ENCODE measurements at regions of chr13 and their contacts with region 1.

Region 1: DNA sequence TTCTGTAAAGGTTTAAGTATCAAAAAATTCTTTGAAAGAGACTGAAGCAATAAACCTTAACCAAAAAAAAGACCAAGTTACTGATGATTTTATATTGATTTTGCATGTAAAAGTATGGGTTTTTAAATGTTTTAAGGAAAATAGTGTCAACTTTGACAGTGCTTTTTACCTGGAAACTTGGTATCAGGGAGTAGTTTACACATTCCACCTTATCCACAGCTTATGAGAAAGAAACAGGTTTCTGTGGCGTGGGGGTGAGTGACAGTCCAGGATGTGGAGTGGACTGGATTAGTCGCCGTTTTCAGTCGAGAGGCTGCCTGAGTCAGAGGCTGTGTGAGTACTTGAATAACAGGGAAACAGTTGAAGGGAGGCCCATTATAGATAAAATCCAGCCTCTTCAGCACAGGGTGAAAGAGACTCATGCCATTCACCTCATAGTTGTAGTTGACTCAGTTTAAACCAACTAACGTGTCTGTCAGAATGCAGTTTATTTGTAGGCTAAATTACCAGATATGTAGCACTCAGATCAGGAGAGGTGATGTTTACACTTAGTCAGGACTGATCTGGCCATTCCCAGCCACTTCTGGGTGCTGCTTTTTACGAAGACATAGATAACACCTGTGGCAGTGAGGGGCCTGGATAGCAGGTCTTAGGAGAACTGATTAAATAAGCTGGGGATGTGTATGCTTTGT is 595 bp upstream of the GPR183 start:
- DNase-seq: peak; percentile 78
- H3K4me3 Mint-ChIP-seq: peak overlapping the region; percentile 79
- H3K27ac Mint-ChIP-seq: peak overlapping the region; percentile 83
- H3K4me1 Mint-ChIP-seq: peaks cover 82% of the 10 kb centered on the region
- H3K27me3 Mint-ChIP-seq: no peaks in the 10 kb centered on the region

Region 2: GRCh38 chr13:99288089-99288488 is 19.7 kb before region 1 on chr13:
- CTCF ChIA-PET with region 1: interaction called, 7 read pairs
- POLR2A ChIA-PET with region 1: interaction called, 393 read pairs
- DNase-seq: peak; percentile 60
- H3K4me3 Mint-ChIP-seq: no peak overlapping the region
- H3K27ac Mint-ChIP-seq: peak overlapping the region; percentile 84
- H3K4me1 Mint-ChIP-seq: peaks cover 73% of the 10 kb centered on the region
- H3K27me3 Mint-ChIP-seq: no peaks in the 10 kb centered on the region

Region 3: DNA sequence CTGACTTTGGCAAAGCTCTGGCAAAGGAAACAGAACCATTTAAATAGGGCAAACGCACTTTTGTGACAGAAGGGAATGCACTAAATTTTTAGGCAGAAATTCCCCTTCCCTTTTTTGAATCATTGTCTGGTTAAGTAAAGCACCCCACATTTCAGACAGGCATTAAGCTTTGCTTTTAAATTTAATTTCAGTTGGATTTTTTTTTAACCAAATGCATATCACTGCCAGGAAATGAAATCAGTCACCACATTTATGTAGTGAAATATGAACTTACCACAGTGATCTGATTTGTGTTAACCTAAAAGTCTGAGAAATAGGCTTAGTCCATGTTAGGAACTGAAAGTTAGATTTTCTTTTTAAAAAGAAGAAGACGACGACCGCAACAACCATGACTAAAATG is 11.4 kb before region 1 on chr13:
- CTCF ChIA-PET with region 1: interaction called, 16 read pairs
- POLR2A ChIA-PET with region 1: interaction called, 139 read pairs
- DNase-seq: no peak
- H3K4me3 Mint-ChIP-seq: peak overlapping the region; percentile 71
- H3K27ac Mint-ChIP-seq: peak overlapping the region; percentile 94
- H3K4me1 Mint-ChIP-seq: peaks cover 78% of the 10 kb centered on the region
- H3K27me3 Mint-ChIP-seq: no peaks in the 10 kb centered on the region

Region 4: DNA sequence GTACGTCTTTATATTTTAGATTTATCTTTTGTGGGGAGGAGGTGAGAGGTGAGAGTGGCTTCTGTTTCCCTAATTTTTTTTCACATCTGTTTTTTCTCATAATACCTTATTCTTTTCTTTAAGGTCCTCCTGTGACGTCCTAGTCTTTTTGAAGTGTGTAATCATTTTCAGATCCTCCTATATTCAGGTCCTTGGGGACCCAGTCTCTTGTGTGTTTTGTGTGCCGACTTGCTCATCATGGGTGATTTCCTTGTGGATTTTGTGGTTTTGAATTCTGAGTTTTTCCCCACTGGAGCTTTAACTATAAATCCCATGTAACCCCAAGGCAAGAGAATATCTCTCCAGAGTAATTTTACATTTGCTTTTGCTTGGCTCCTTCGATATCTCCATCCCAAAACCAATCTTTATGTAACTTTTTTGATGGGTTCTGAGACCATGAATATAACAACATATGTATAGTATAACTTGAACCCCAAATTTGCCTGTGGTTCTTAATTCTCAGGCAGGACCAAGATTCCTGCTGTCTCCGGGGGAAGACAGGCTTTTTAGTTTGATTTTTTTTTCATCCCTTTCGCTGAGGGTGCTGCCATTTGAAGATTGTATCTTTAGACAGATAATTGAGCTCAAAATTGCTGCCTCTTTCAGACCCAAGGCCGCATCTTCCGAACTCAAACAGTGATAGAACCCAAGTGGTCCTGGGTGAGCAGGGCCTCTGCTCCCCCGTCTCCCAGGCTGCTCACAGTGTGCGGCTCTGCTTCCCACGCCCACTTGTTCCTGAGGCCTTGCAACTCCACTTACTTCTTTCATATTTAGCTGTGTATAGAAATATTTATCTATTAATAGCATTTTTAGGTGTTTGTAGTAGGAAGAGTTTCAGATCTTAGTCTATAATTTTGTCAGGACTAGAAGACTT is 58.5 kb after region 1 on chr13:
- CTCF ChIA-PET with region 1: interaction called, 3 read pairs
- POLR2A ChIA-PET with region 1: interaction called, 349 read pairs
- DNase-seq: no peak
- H3K4me3 Mint-ChIP-seq: no peak overlapping the region
- H3K27ac Mint-ChIP-seq: no peak overlapping the region
- H3K4me1 Mint-ChIP-seq: peaks cover 82% of the 10 kb centered on the region
- H3K27me3 Mint-ChIP-seq: no peaks in the 10 kb centered on the region

Measured in activated CD4-positive, alpha-beta memory T cell treated with anti-CD3 and anti-CD28 coated beads, Interleukin-2, amount 10 ng/mL, durations not matched to agents 7 days and 5 days (primary cell).